H1 (cell line): ENCODE measurements at regions of chr1 and their contacts with region 1.

Region 1: DNA sequence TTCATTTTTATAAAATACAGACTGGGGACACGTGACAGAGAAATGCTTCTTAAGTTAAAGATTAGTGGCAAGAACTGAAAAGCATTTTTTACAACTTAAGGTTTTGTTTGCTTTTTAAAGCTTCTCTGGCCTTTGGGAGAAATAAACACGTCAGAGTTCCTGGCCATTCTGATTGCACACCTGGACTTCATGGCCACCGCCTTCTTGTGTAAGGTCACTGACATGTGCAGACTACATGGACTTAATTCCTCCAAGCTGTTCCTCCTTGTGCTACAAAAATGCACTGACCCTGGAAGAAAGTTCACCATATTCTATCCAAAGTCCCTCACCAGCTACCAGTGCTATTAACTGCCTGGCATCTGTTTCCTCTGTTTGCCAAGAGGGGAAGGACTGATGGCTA is 56.1 kb downstream of the GADD45A start:
- DNase-seq: no peak
- H3K4me3 ChIP-seq: no peak overlapping the region
- H3K27ac ChIP-seq: no peak overlapping the region
- H3K4me1 ChIP-seq: peaks cover 4 to 7% (median 5%) of the 10 kb centered on the region in 4 experiments
- H3K27me3 ChIP-seq: no peaks in the 10 kb centered on the region
- CTCF ChIP-seq: no peak
- EP300 ChIP-seq: no peak
- POLR2A ChIP-seq: no peak
- RAD21 ChIP-seq: no peak

Region 2: DNA sequence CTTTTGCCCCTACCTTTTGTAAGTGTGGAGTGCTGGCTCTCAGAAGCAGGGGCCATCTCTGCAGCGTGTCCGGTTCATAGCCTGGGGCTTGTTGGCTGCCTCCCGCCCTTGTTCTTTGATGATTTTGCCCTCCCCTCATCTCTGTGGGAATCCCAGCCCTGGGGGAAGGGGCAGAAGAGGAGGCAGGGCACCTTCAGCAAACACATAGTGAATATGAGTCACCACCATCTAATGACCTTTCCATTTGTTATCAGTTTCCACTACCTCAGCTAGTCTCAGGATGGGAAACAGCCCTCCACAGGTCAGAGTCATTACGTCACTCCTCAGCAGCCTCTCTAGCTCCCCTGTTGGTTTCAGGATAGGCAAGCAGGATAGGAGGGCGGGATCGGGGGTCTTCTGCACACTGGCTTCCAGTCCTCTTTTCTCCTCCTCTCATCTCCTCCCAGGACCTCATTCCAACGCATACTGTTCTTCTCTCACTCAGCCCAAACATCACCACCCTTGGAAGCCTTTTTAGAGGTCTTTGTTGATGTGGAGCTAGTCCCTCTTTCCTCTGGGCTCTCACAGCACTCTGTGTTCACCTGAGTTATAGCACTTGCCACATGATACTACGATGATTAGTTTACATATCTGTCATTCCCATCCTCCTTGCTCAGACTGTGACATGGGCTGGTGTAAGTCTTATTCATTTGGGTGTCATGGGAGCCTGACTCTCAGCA is 40.3 kb before region 1 on chr1:
- CTCF ChIA-PET with region 1: interaction called, 10 read pairs
- POLR2A ChIA-PET with region 1: no interaction called
- DNase-seq: peak in 1 of 2 experiments; percentile 31
- H3K4me3 ChIP-seq: no peak overlapping the region
- H3K27ac ChIP-seq: no peak overlapping the region
- H3K4me1 ChIP-seq: peaks cover 0 to 3% (median 0%) of the 10 kb centered on the region in 4 experiments; a peak in 2 of 7 replicates
- H3K27me3 ChIP-seq: no peaks in the 10 kb centered on the region
- CTCF ChIP-seq: peak; percentile 50 to 61 (median 52)
- EP300 ChIP-seq: no peak
- POLR2A ChIP-seq: no peak
- RAD21 ChIP-seq: peak; percentile 30 to 36

Region 3: GRCh38 chr1:67722292-67722944 is 18.7 kb before region 1 on chr1:
- CTCF ChIA-PET with region 1: interaction called, 11 read pairs
- POLR2A ChIA-PET with region 1: interaction called, 5 read pairs
- DNase-seq: no peak
- H3K4me3 ChIP-seq: no peak overlapping the region
- H3K27ac ChIP-seq: no peak overlapping the region
- H3K4me1 ChIP-seq: peaks cover 0 to 7% (median 3%) of the 10 kb centered on the region in 4 experiments; a peak in 3 of 7 replicates
- H3K27me3 ChIP-seq: no peaks in the 10 kb centered on the region
- CTCF ChIP-seq: no peak
- EP300 ChIP-seq: no peak
- POLR2A ChIP-seq: no peak
- RAD21 ChIP-seq: no peak

Region 4: GRCh38 chr1:67856921-67857320 is 115.8 kb after region 1 on chr1:
- CTCF ChIA-PET with region 1: no interaction called
- POLR2A ChIA-PET with region 1: no interaction called
- DNase-seq: no peak
- H3K4me3 ChIP-seq: no peak overlapping the region
- H3K27ac ChIP-seq: no peak overlapping the region
- H3K4me1 ChIP-seq: no peaks in the 10 kb centered on the region
- H3K27me3 ChIP-seq: no peaks in the 10 kb centered on the region
- CTCF ChIP-seq: no peak
- EP300 ChIP-seq: no peak
- POLR2A ChIP-seq: no peak
- RAD21 ChIP-seq: no peak